ENCODE measurements at regions of chr6 and their contacts with region 1.

Region 1: DNA sequence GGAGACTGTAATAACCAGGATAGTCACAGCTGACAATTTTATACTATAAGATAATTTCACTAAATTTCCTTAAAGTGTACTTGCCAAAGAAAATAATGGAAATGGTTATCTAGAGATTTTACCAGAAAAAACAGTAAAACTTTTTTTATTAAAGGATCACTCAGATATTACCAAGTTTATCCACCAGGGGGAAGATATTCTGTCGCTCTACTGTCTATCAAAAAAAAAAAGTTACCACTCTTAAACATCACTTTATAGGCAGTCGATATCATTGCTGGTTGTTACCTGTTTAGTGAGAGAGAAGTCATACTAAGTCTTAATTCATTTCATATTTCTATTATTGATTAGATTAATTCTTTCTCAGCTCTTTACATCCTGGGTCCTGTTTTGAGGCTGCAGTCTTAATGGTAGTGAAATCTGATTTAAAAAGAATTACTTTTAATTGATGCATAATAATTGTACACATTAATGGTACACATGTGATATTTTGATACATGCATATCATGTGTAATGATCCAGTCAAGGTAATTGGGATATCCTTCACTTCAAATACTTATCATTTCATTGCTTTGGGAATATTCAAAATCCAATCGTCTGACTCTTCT is 18.9 kb downstream of the L3MBTL3 start:
- DNase-seq: no peak
- H3K4me3 Mint-ChIP-seq: no peak overlapping the region
- H3K27ac Mint-ChIP-seq: no peak overlapping the region
- H3K4me1 Mint-ChIP-seq: peaks cover 43% of the 10 kb centered on the region
- H3K27me3 Mint-ChIP-seq: no peaks in the 10 kb centered on the region

Region 2: DNA sequence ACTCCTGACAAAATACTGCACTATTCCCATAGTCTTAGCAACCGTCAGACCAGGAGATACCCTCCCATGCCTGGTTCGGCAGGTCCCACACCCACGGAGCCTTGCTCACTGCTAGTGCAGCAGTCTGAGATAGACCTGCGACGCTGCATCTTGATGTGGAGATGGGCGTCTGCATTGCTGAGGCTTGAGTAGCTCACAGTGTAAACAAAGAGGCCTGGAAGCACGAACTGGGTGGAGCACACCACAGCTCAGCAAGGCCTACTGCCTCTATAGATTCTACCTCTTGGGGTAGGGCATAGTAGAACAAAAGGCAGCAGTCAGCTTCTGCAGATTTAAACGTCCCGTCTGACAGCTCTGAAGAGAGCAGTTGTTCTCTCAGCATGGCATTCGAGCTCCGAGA is 201.6 kb before region 1 on chr6:
- CTCF ChIA-PET with region 1: no interaction called
- POLR2A ChIA-PET with region 1: no interaction called
- intact Hi-C with region 1: no loop called
- DNase-seq: no peak
- H3K4me3 Mint-ChIP-seq: no peak overlapping the region
- H3K27ac Mint-ChIP-seq: no peak overlapping the region
- H3K4me1 Mint-ChIP-seq: no peaks in the 10 kb centered on the region
- H3K27me3 Mint-ChIP-seq: peaks cover 5% of the 10 kb centered on the region

Region 3: GRCh38 chr6:130069485-130069884 is 32.2 kb after region 1 on chr6:
- CTCF ChIA-PET with region 1: no interaction called
- POLR2A ChIA-PET with region 1: no interaction called
- intact Hi-C with region 1: no loop called
- DNase-seq: no peak
- H3K4me3 Mint-ChIP-seq: no peak overlapping the region
- H3K27ac Mint-ChIP-seq: no peak overlapping the region
- H3K4me1 Mint-ChIP-seq: peaks cover 3% of the 10 kb centered on the region
- H3K27me3 Mint-ChIP-seq: no peaks in the 10 kb centered on the region

Region 4: DNA sequence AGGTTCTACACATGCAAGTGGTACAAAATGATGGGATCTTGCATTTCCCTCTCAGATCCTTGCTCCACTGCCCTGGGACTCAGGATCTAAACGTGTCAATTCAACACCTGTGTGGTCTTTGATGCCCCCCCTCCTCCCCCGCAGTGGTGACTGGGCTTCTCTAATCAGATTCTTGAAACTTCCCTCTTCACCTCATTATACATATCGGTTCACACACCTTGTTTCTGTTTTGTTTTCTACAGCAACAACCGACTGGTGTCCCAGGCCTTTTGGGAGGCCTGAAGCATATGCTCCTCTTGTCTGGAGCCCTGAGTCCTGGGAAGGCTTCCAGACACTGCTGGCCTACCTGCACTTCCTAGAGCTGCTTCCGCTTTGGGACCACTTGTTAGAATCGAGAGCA is 165.5 kb after region 1 on chr6:
- CTCF ChIA-PET with region 1: interaction called, 3 read pairs
- POLR2A ChIA-PET with region 1: no interaction called
- intact Hi-C with region 1: loop called (anchors 5 kb)
- DNase-seq: peak; percentile 55
- H3K4me3 Mint-ChIP-seq: peak overlapping the region; percentile 9
- H3K27ac Mint-ChIP-seq: no peak overlapping the region
- H3K4me1 Mint-ChIP-seq: peaks cover 31% of the 10 kb centered on the region
- H3K27me3 Mint-ChIP-seq: no peaks in the 10 kb centered on the region

Region 5: GRCh38 chr6:130843575-130844320 is 806.4 kb after region 1 on chr6:
- CTCF ChIA-PET with region 1: interaction called, 4 read pairs
- POLR2A ChIA-PET with region 1: no interaction called
- intact Hi-C with region 1: loop called (anchors 5 kb)
- DNase-seq: no peak
- H3K4me3 Mint-ChIP-seq: no peak overlapping the region
- H3K27ac Mint-ChIP-seq: no peak overlapping the region
- H3K4me1 Mint-ChIP-seq: peaks cover 2% of the 10 kb centered on the region
- H3K27me3 Mint-ChIP-seq: no peaks in the 10 kb centered on the region